ENCODE measurements at regions of chr6 and their contacts with region 1.

Region 1: DNA sequence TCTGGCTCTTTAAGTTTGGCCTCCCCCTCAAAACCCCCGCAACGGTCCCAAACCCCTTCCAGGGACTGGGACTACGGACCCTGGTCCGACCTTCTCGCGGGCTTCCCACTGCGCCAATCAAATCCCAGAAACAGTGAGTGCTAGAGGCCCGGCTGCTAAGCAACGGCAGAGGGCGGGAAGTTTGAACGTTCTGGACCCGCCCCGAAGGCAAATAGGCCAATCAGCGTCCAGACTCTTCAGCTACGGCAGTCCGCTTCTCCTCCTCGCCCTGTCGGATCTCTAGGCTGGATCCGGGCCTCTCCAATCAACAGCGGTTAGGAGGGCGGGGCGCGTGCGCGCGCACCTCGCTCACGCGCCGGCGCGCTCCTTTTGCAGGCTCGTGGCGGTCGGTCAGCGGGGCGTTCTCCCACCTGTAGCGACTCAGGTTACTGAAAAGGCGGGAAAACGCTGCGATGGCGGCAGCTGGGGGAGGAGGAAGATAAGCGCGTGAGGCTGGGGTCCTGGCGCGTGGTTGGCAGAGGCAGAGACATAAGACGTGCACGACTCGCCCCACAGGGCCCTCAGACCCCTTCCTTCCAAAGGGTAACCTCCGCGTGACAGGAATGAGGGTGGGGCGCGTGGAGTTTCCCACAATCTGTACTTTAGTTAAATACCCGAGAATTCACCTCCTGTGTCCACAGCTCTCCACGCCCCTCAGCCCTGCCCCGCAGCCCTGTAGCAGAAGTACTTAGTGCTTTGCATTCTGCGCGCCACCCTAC is at the start of gene MSH5:
- DNase-seq: peak; percentile 96 to 99
- H3K4me3 ChIP-seq: peak within 1 kb of the TSS; percentile 61 to 73
- H3K27ac ChIP-seq: peak within 1 kb of the TSS; percentile 56 to 94
- H3K4me1 ChIP-seq: peaks cover 9 to 23% of the 10 kb centered on the region in 2 donors
- H3K27me3 ChIP-seq: no peaks in the 10 kb centered on the region
- CTCF ChIP-seq: no peak
- total RNA-seq, gene MSH5: 17.7 TPM

Region 2: DNA sequence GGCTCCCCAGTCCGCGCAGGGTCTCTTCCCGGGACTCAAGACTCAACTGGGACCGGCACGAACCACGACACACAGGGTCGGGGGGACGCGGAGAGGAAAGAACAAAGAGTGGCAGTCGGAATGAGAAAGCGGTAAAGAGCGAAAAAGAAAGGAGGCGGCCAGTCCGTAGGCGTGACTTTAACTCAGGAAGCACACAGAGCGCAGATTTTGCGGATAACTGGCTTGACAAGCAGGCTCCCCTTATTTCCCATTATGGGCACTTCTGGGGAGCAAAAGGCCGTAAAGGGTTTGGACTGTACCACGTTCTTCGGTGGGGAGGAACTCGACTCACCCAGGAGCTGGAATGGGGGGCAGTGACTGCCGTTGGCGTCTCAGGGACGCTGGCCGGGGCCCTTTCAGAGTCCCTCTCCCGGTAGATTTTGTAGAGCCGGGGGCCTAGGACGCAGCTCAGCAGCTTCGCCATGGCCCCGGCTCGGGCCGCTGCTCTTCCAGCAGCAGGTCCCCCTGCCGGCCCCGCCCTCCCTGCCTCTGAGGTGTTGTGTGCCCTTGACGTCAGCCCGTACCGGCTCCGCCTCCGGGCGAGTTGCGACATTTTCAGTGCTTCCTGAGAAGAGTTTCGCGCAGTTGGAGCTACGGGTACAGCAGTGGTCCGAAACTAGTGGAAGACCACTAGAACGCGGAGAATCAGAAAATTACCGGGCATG is 36.8 kb before region 1 on chr6 and contains the start of gene ABHD16A:
- intact Hi-C with region 1: loop called (anchors 2 kb)
- DNase-seq: peak; percentile 97 to 100
- H3K4me3 ChIP-seq: peak within 1 kb of the TSS; percentile 72 to 78
- H3K27ac ChIP-seq: peak within 1 kb of the TSS; percentile 92 to 97
- H3K4me1 ChIP-seq: peaks cover 13 to 21% of the 10 kb centered on the region in 2 donors
- H3K27me3 ChIP-seq: no peaks in the 10 kb centered on the region
- CTCF ChIP-seq: no peak
- total RNA-seq, gene ABHD16A: 28.0 TPM

Measured in ascending aorta (tissue), 2 donors.